Heart right ventricle (tissue), 16 donors: ENCODE measurements at regions of chr12 and their contacts with region 1.

Region 1: GRCh38 chr12:101830367-101831325 is at the start of gene GNPTAB:
- DNase-seq: peak; percentile 92 to 94
- ATAC-seq: peak; percentile 98 to 100 (median 98)
- H3K4me3 ChIP-seq: peak within 1 kb of the TSS; percentile 74 to 95 (median 87)
- H3K27ac ChIP-seq: peak within 1 kb of the TSS; percentile 38 to 89 (median 87)
- H3K4me1 ChIP-seq: peaks cover 0 to 44% (median 20%) of the 10 kb centered on the region in 9 donors
- H3K27me3 ChIP-seq: no peaks in the 10 kb centered on the region
- CTCF ChIP-seq: peak; percentile 66 to 92 (median 81)
- total RNA-seq, gene GNPTAB: 39.9 to 60.6 (median 49.0) TPM

Region 2: GRCh38 chr12:101490286-101490920 is 340.2 kb before region 1 on chr12:
- intact Hi-C with region 1: loop called in 1 of 10 experiments (anchors 10 kb)
- DNase-seq: peak in 1 of 2 donors; percentile 5
- ATAC-seq: peak in 7 of 8 donors; percentile 34 to 80 (median 55)
- H3K4me3 ChIP-seq: no peak overlapping the region
- H3K27ac ChIP-seq: no peak overlapping the region
- H3K4me1 ChIP-seq: peaks cover 0 to 15% (median 0%) of the 10 kb centered on the region in 9 donors
- H3K27me3 ChIP-seq: peaks cover 0 to 10% (median 0%) of the 10 kb centered on the region in 7 donors
- CTCF ChIP-seq: peak in 8 of 9 donors; percentile 9 to 57 (median 47)

Region 3: GRCh38 chr12:101697197-101697929 is 133.3 kb before region 1 on chr12 and contains the start of gene CHPT1:
- intact Hi-C with region 1: loop called in 1 of 10 experiments (anchors 5 kb)
- DNase-seq: peak; percentile 70 to 88
- ATAC-seq: peak; percentile 74 to 87 (median 78)
- H3K4me3 ChIP-seq: peak within 1 kb of the TSS; percentile 83 to 95 (median 88)
- H3K27ac ChIP-seq: peak within 1 kb of the TSS; percentile 92 to 97 (median 96)
- H3K4me1 ChIP-seq: peaks cover 0 to 50% (median 34%) of the 10 kb centered on the region in 9 donors
- H3K27me3 ChIP-seq: no peaks in the 10 kb centered on the region
- CTCF ChIP-seq: no peak
- total RNA-seq, gene CHPT1: 85.8 to 215 (median 108) TPM

Region 4: GRCh38 chr12:101792051-101792931 is 38.4 kb before region 1 on chr12:
- intact Hi-C with region 1: loop called in 1 of 10 experiments (anchors 5 kb)
- DNase-seq: no peak
- ATAC-seq: peak in 2 of 8 donors; percentile 44 to 57
- H3K4me3 ChIP-seq: no peak overlapping the region
- H3K27ac ChIP-seq: peak overlapping the region in 1 of 10 donors; percentile 31
- H3K4me1 ChIP-seq: peaks cover 0 to 26% (median 0%) of the 10 kb centered on the region in 9 donors
- H3K27me3 ChIP-seq: no peaks in the 10 kb centered on the region
- CTCF ChIP-seq: peak in 7 of 9 donors; percentile 14 to 53 (median 39)